Ascending aorta (tissue), 2 donors: ENCODE measurements at regions of chr16 and their contacts with region 1.

Region 1: GRCh38 chr16:65099607-65100006 is 22.3 kb downstream of the CDH11 start:
- DNase-seq: no peak
- H3K4me3 ChIP-seq: no peak overlapping the region
- H3K27ac ChIP-seq: no peak overlapping the region
- H3K4me1 ChIP-seq: no peaks in the 10 kb centered on the region
- H3K27me3 ChIP-seq: no peaks in the 10 kb centered on the region
- CTCF ChIP-seq: no peak

Region 2: GRCh38 chr16:64830653-64831052 is 269.0 kb before region 1 on chr16:
- intact Hi-C with region 1: loop called (anchors 5 kb)
- DNase-seq: no peak
- H3K4me3 ChIP-seq: no peak overlapping the region
- H3K27ac ChIP-seq: no peak overlapping the region
- H3K4me1 ChIP-seq: no peaks in the 10 kb centered on the region
- H3K27me3 ChIP-seq: no peaks in the 10 kb centered on the region
- CTCF ChIP-seq: no peak